ENCODE measurements at regions of chr15 and their contacts with region 1.

Region 1: GRCh38 chr15:77543159-77543882 is 89.4 kb downstream of the LINGO1 start:
- DNase-seq: peak; percentile 77
- H3K4me3 ChIP-seq: peak overlapping the region in 2 of 3 experiments; percentile 40 to 43
- H3K27ac ChIP-seq: peak overlapping the region; percentile 9
- H3K4me1 ChIP-seq: peaks cover 27% of the 10 kb centered on the region
- H3K27me3 ChIP-seq: no peaks in the 10 kb centered on the region
- CTCF ChIP-seq: peak; percentile 82 to 97

Region 2: DNA sequence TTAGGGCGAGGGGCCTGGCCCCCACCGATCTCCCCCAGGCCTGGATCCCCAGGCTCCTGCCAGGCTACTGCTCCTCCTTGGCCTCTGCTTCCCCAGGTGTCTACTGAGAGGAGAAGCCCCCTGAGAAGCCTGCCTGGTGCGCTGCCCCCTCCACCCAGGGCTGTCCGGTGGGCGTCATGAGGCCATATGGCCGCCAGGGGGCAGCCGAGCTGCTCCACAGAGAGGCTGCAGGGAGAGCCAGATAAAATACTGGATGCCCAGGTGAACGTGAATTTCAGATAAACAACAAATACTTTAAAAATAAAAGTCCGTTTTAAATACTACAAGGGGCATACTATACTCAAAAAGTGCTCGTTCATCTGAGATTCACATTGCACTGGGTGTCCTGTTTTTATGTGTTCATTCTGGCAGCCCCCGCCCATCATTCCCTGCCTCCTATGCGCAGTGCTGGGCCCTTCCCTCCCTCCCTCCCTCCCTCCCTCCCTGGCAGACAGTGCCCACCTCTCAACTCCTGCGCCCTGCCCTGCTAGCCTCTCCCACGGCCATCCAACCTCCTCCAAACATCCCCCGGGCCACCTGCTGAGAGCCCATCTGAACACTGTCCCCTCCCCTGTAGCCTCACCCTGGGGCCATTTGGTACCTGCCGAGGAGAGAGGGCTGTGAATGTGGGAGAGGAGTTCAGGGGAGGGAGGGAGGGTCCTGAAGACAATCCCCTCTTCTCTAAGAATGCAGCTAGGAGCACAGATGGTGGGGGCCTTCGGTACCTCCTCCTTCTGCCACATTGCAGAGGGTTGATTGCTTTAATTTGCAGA is 518.8 kb before region 1 on chr15:
- CTCF ChIA-PET with region 1: interaction called, 3 read pairs
- dilution Hi-C with region 1: no loop called
- in situ Hi-C with region 1: no loop called
- intact Hi-C with region 1: loop called (anchors 1 kb)
- DNase-seq: peak; percentile 21
- H3K4me3 ChIP-seq: no peak overlapping the region
- H3K27ac ChIP-seq: no peak overlapping the region
- H3K4me1 ChIP-seq: peaks cover 12% of the 10 kb centered on the region
- H3K27me3 ChIP-seq: no peaks in the 10 kb centered on the region
- CTCF ChIP-seq: peak; percentile 75 to 88

Region 3: DNA sequence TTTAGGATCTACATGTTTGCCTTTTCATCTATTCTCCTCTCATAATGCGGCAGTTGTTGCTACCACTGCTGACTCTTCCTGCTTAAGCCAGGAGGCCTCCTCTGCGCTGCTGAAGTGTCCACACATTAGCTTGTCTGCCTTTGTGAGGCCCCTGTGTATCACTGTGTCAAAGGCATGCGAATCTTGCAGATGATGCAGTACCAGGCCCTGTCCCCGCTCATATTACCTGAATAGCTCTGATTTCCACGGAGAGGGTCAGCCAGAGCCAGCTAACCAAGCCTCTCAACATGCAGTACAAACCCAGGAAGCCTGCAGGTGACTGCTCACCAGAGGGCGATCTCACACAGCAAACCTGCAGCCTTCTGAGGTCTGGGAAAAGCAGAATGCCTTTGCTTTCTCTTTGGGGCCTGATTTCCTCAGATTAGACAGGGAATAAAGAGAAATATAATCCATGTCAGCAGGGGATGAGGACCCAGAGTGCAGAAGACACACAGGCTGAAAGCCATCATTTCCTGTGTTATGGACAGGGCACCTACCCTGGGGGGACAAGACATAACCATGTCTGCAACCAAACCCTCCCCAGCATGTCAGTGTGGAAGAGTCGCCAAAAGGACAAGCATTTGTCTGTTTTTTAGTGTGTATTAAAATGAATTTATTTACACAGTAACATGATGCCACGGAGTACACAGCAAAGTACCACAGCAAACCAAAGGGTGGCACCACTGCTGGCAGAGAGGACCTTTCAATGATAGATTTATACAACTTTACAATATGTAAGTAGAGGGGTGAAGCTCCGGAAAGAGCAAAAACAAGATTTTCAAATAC is 435.6 kb before region 1 on chr15:
- CTCF ChIA-PET with region 1: interaction called, 3 read pairs
- dilution Hi-C with region 1: no loop called
- in situ Hi-C with region 1: loop called in 1 of 2 experiments (anchors 10 kb)
- intact Hi-C with region 1: loop called (anchors 1 kb)
- DNase-seq: no peak
- H3K4me3 ChIP-seq: no peak overlapping the region
- H3K27ac ChIP-seq: no peak overlapping the region
- H3K4me1 ChIP-seq: peaks cover 3% of the 10 kb centered on the region
- H3K27me3 ChIP-seq: no peaks in the 10 kb centered on the region
- CTCF ChIP-seq: peak; percentile 59 to 80

Region 4: DNA sequence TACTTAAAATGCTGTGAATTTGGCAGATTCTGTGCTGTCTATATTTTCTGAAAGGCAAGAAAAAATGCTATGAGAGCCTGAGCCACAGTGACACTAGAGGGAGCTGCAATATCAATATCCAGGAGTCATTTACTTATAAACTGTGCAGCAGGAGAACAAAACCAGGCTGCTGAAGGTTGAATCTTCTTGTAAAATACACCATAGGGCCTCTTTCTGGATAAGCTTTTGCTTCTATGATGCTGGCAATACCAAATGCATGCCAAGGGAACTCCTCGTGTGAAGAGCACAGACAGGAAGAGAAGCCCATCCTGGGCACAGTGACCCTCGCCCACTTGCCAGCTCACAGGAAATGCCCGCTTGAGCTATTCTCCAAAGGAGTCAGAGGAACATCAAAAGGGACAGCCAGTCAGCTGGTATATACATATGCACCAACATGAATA is 424.4 kb before region 1 on chr15:
- CTCF ChIA-PET with region 1: interaction called, 6 read pairs
- dilution Hi-C with region 1: loop called (anchors 5 kb)
- in situ Hi-C with region 1: loop called (anchors 5 to 10 kb)
- intact Hi-C with region 1: loop called (anchors 1 kb)
- DNase-seq: peak; percentile 40
- H3K4me3 ChIP-seq: no peak overlapping the region
- H3K27ac ChIP-seq: no peak overlapping the region
- H3K4me1 ChIP-seq: no peaks in the 10 kb centered on the region
- H3K27me3 ChIP-seq: no peaks in the 10 kb centered on the region
- CTCF ChIP-seq: peak; percentile 81 to 83

Region 5: DNA sequence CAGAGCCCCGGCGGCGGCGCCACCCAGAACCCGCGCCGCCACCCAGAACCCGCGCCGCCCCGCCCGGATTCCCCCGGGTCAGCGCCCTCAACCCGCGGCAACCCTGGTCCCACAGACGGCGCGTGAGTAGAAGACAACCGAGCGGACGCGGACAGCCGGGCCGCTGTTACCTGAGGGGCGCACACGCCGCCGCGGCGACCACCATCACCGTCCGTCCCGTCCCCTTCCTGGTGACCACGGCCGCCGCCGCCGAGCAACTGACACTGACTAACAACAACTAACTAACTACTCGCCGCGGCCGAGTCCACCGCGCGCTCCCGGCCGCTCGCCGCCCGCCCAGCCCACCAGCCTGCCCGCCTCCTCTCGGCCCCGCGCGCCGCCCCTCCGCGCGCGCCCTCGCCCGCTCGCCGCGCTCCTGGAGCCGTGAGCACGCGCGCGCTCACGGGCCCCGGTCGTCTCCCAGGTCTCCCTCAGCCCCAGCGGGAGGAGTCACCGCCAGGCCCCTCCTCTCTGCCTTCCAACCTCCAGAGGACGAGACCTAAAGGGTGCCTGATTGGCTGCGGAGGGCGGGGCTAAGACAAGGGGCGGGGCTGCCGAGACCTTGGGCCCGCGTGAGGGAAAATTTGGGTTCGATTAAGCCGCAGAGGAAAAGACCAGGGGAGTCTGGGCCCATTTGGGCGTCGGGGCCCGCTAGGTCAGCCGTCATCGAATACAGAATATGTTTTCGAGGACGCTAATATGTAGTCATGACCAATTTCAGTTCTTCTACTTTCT is 123.3 kb before region 1 on chr15 and contains the start of gene PEAK1:
- CTCF ChIA-PET with region 1: no interaction called
- dilution Hi-C with region 1: no loop called
- in situ Hi-C with region 1: no loop called
- intact Hi-C with region 1: loop called (anchors 2 kb)
- DNase-seq: peak; percentile 98
- H3K4me3 ChIP-seq: peak within 1 kb of the TSS; percentile 93 to 99 (median 96)
- H3K27ac ChIP-seq: peak within 1 kb of the TSS; percentile 87
- H3K4me1 ChIP-seq: peaks cover 16% of the 10 kb centered on the region
- H3K27me3 ChIP-seq: no peaks in the 10 kb centered on the region
- CTCF ChIP-seq: no peak
- total RNA-seq, gene PEAK1: 25.5 to 27.6 TPM

Region 6: DNA sequence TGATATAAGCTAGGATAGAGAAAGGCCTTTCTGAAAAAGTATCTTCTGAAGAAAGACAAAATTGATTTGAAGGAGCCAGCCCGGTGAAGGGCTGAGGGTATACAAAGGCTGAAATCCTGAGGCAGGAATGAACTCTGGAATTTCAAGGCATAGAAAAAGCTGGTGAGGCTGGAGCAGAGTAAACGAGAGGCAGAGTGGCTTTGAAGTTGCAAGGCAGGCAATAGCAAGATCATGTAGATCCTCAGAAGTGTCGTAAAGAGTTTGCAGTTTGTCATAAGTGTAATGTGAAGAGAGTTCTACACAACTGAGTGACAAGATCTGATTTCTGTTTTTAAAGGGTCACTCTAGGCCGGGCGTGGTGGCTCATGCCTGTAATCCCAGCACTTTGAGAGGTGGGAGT is 53.7 kb before region 1 on chr15:
- CTCF ChIA-PET with region 1: no interaction called
- dilution Hi-C with region 1: no loop called
- in situ Hi-C with region 1: no loop called
- intact Hi-C with region 1: no loop called
- DNase-seq: no peak
- H3K4me3 ChIP-seq: no peak overlapping the region
- H3K27ac ChIP-seq: no peak overlapping the region
- H3K4me1 ChIP-seq: peaks cover 5% of the 10 kb centered on the region
- H3K27me3 ChIP-seq: no peaks in the 10 kb centered on the region
- CTCF ChIP-seq: no peak

Region 7: DNA sequence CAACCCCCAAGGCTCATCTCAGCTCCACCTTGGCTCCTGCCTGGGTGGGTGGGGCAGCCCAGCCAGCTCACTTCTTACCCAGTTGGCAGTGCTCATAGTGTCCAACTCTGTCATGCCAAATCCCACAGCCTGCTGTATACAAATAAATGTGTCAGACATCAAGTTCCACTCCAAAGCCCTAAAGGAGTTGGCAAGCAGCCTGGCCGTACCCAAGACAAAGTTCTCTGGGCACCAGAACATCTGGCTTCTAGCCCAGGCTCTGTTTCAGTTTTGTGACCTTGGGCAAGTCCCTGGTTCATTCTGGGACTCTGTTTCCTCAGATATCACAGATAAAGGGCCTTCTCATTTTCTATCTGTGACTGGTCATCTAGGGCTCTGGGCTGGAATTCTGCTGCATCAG is 673.4 kb after region 1 on chr15:
- CTCF ChIA-PET with region 1: no interaction called
- dilution Hi-C with region 1: no loop called
- in situ Hi-C with region 1: no loop called
- intact Hi-C with region 1: no loop called
- DNase-seq: peak; percentile 69
- H3K4me3 ChIP-seq: no peak overlapping the region
- H3K27ac ChIP-seq: no peak overlapping the region
- H3K4me1 ChIP-seq: no peaks in the 10 kb centered on the region
- H3K27me3 ChIP-seq: no peaks in the 10 kb centered on the region
- CTCF ChIP-seq: no peak